IMR-90 (cell line): ENCODE measurements at regions of chr9 and their contacts with region 1.

Region 1: GRCh38 chr9:86614871-86615849 is 260.9 kb upstream of the TUT7 start:
- DNase-seq: peak; percentile 70
- ATAC-seq: peak; percentile 74
- H3K4me3 ChIP-seq: no peak overlapping the region
- H3K27ac ChIP-seq: peak overlapping the region; percentile 80; the same call in 1 of the 2 replicates
- H3K4me1 ChIP-seq: peaks cover 8% of the 10 kb centered on the region
- H3K27me3 ChIP-seq: no peaks in the 10 kb centered on the region
- CTCF ChIP-seq: peak; percentile 46
- POLR2A ChIP-seq: no peak
- RAD21 ChIP-seq: peak; percentile 50

Region 2: DNA sequence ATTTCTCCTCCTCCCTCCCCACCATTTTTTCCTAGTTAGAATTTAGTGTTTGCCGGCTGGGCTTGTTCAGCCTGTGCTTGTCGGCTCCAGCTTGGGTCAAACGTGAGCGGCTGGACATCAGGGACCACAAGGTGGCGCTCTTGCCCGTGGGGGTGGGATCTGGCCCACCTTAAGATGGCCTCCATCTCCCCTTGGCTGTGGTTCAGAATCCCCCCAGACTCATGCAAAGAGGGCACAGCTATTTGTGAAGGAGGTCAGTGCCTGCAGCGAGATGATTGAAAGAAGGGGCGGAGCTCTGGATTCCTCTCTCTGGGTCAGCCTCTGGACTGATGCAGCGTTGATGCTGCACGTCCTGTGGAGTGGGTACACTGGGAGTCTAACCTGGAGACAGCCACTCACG is 22.4 kb after region 1 on chr9:
- CTCF ChIA-PET with region 1: interaction called, 6 read pairs
- POLR2A ChIA-PET with region 1: no interaction called
- dilution Hi-C with region 1: no loop called
- in situ Hi-C with region 1: no loop called
- intact Hi-C with region 1: loop called (anchors 1 kb)
- DNase-seq: peak; percentile 39
- ATAC-seq: peak; percentile 62
- H3K4me3 ChIP-seq: no peak overlapping the region
- H3K27ac ChIP-seq: no peak overlapping the region
- H3K4me1 ChIP-seq: no peaks in the 10 kb centered on the region; the same call in 1 of the 2 replicates
- H3K27me3 ChIP-seq: 0 out of 2 replicates have a peak, but pooled peaks cover 2% of the 10 kb centered on the region
- CTCF ChIP-seq: peak; percentile 62
- POLR2A ChIP-seq: no peak
- RAD21 ChIP-seq: peak; percentile 83

Region 3: DNA sequence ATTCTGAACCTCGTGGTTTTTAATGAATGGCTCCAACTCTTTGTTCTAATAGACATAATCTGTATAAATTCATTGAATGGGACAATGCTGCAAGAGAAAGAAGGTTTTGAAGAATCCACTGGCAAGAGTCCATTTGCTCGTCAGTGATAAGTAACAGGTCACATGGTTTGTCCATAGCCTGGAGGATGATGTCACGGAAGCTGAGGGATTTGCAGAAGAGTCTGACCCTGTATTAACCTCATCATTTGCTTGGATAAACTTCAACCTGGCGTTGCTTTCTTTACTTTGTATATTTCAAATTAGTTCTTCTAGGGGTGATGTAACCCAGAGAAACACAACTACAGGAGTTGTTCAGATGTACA is 134.7 kb after region 1 on chr9:
- CTCF ChIA-PET with region 1: no interaction called
- POLR2A ChIA-PET with region 1: no interaction called
- dilution Hi-C with region 1: no loop called
- in situ Hi-C with region 1: no loop called
- intact Hi-C with region 1: loop called (anchors 1 kb)
- DNase-seq: peak; percentile 94
- ATAC-seq: peak; percentile 70
- H3K4me3 ChIP-seq: no peak overlapping the region
- H3K27ac ChIP-seq: peak overlapping the region; percentile 62; the same call in 1 of the 2 replicates
- H3K4me1 ChIP-seq: peaks cover 11% of the 10 kb centered on the region
- H3K27me3 ChIP-seq: no peaks in the 10 kb centered on the region; the same call in 1 of the 2 replicates
- CTCF ChIP-seq: no peak
- POLR2A ChIP-seq: no peak
- RAD21 ChIP-seq: no peak

Region 4: DNA sequence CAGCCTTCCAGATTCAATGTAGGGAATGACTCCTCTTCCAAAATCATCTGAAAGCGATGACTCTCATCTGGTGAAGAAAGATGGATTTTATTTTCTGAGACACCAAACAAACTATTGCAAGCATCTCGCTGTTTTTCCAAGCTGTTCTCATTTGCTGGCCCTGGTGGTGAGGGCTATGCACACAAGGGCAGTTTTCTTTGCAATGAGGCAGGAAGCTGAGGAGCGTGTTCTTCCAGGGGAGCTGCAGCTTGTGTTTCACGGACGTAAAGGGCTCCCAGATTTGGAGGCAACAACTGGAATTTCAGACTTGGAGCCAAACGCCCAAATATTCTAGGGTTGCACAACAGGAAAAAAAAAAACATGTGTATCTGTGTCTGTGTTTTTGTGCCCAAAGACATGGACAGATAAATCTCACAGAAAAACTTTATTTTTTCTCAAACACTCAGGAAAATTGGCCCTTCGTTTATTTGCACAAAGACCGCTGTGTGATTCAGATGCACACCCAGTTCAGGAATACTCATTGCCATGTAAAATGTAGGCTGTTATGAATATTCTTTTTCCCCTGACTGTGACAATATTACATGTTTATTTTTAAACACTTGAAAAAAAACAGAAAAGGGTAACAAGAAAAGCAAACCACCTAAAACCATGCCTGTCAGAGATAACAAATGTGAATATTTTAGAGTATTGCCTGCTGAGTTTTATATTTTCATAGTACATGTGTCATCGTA is 180.8 kb after region 1 on chr9:
- CTCF ChIA-PET with region 1: no interaction called
- POLR2A ChIA-PET with region 1: no interaction called
- dilution Hi-C with region 1: no loop called
- in situ Hi-C with region 1: no loop called
- intact Hi-C with region 1: loop called (anchors 1 kb)
- DNase-seq: peak; percentile 83
- ATAC-seq: peak; percentile 83
- H3K4me3 ChIP-seq: no peak overlapping the region
- H3K27ac ChIP-seq: peak overlapping the region; percentile 16; the same call in 1 of the 2 replicates
- H3K4me1 ChIP-seq: peaks cover 9% of the 10 kb centered on the region
- H3K27me3 ChIP-seq: no peaks in the 10 kb centered on the region
- CTCF ChIP-seq: peak; percentile 24; the same call in 1 of the 2 replicates
- POLR2A ChIP-seq: no peak
- RAD21 ChIP-seq: 0 out of 2 replicates have a peak, but pooled peaks have one; percentile 19